Activated B cell treated with CpG ODN at 0.5 μM for 24 hours (primary cell): ENCODE measurements at regions of chr7 and their contacts with region 1.

Region 1: GRCh38 chr7:31705377-31705776 is 18.4 kb downstream of the PPP1R17 start:
- DNase-seq: no peak
- ATAC-seq: no peak
- H3K4me3 Mint-ChIP-seq: no peak overlapping the region
- H3K27ac Mint-ChIP-seq: no peak overlapping the region
- H3K4me1 Mint-ChIP-seq: peaks cover 11% of the 10 kb centered on the region
- H3K27me3 Mint-ChIP-seq: no peaks in the 10 kb centered on the region
- CTCF ChIP-seq: no peak

Region 2: DNA sequence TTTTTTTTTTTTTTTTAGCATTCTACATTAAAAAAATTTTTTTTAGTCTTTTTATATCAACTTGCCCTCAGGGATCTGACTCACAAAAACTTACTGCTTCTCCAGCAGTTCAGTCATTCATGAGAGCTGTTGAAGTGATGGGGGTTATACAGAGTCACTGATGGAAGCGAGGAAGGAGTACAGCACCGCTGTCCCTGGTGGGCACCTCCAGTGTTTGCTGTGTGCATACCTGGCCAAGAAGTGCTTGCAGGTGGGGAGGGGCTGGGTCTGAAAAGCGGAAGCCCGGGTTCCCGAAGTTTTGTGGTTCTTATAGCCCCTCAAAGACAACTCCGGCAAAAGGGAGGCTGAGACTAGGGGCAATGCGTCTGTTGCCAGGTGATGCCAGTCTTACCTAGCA is 888.0 kb before region 1 on chr7:
- CTCF ChIA-PET with region 1: no interaction called
- POLR2A ChIA-PET with region 1: interaction called, 13 read pairs
- intact Hi-C with region 1: no loop called
- DNase-seq: no peak
- ATAC-seq: no peak
- H3K4me3 Mint-ChIP-seq: no peak overlapping the region
- H3K27ac Mint-ChIP-seq: no peak overlapping the region
- H3K4me1 Mint-ChIP-seq: no peaks in the 10 kb centered on the region
- H3K27me3 Mint-ChIP-seq: peaks cover 1% of the 10 kb centered on the region
- CTCF ChIP-seq: no peak